Ovary (tissue), 10 donors: ENCODE measurements at regions of chr3 and their contacts with region 1.

Region 1: GRCh38 chr3:74410276-74410941 is 204.1 kb downstream of the CNTN3 start:
- DNase-seq: no peak
- H3K4me3 ChIP-seq: no peak overlapping the region
- H3K27ac ChIP-seq: no peak overlapping the region
- H3K4me1 ChIP-seq: no peaks in the 10 kb centered on the region
- H3K27me3 ChIP-seq: no peaks in the 10 kb centered on the region
- CTCF ChIP-seq: no peak
- EP300 ChIP-seq: no peak
- POLR2A ChIP-seq: no peak

Region 2: GRCh38 chr3:74434406-74434805 is 24.0 kb after region 1 on chr3:
- intact Hi-C with region 1: loop called in 1 of 4 experiments (anchors 1 kb)
- DNase-seq: no peak
- H3K4me3 ChIP-seq: no peak overlapping the region
- H3K27ac ChIP-seq: no peak overlapping the region
- H3K4me1 ChIP-seq: no peaks in the 10 kb centered on the region
- H3K27me3 ChIP-seq: no peaks in the 10 kb centered on the region
- CTCF ChIP-seq: no peak
- EP300 ChIP-seq: no peak
- POLR2A ChIP-seq: no peak

Region 3: DNA sequence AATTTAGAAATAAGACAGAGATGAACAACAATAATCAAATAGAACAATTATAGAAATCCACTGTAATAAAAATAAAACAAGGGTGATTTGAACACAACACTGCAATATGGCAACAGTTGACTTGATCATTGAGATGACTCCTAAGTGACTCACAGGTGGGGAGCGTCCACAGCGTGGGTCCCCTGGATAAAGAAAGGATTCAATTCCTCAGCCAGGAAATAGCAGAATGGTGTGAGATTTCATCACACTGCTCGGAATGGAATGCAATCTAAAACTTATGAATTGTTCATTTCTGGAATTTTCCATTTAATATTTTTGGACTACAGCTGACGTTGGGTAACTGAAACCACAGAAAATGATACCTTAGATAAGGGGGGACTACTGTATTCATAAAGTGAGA is 122.0 kb after region 1 on chr3:
- intact Hi-C with region 1: no loop called
- DNase-seq: no peak
- H3K4me3 ChIP-seq: no peak overlapping the region
- H3K27ac ChIP-seq: no peak overlapping the region
- H3K4me1 ChIP-seq: no peaks in the 10 kb centered on the region
- H3K27me3 ChIP-seq: no peaks in the 10 kb centered on the region
- CTCF ChIP-seq: no peak
- EP300 ChIP-seq: no peak
- POLR2A ChIP-seq: no peak

Region 4: DNA sequence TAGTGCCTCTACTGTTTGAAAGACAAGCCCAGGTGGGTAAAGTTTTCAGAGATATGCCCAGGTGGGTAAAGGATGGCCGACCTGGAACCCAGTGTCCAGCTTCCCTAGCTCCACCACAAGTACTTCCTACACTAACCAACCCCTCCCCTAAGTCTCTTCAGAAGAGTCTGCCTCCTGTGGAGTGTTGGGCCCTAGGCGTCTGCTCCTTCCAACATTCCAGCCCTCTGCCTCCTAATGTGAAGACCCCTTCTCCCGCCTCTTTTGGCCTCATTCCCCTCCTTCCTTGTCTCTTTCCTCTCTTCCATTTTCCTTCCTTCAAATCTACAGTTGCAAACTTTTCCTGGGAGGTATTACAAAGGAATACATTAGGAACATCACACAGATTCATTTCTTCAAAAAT is 165.4 kb after region 1 on chr3:
- intact Hi-C with region 1: no loop called
- DNase-seq: no peak
- H3K4me3 ChIP-seq: no peak overlapping the region
- H3K27ac ChIP-seq: no peak overlapping the region
- H3K4me1 ChIP-seq: no peaks in the 10 kb centered on the region
- H3K27me3 ChIP-seq: no peaks in the 10 kb centered on the region
- CTCF ChIP-seq: no peak
- EP300 ChIP-seq: no peak
- POLR2A ChIP-seq: no peak